Gastrocnemius medialis (tissue), 4 donors: ENCODE measurements at regions of chr22 and their contacts with region 1.

Region 1: DNA sequence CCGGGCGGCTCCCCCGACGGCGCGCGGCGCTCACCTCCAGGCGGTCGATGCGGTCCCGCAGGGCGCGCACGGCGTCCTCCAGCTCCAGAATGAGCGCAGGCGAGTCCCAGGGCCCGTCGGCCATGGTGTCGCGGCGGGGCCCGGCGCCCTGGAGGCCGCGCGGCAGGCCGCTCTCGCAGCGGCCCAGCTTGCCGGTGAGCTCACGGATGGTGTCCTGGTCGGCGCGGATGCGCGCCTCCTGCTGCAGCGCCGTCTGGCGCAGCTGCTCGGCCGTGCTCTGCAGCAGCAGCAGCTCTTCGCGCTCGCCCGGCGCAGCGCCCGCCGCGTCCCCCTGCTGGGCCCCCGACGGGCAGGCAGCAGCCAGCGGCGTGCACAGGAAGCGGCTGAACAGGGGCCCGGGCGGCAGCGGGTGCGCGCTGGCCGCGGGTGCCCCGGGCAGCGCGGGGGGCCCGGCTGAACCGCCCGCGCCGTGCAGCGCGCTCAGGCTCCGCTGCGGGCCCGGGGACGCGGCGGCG is 570 bp downstream of the NPTXR start:
- DNase-seq: no peak
- ATAC-seq: peak; percentile 29 to 36
- H3K4me3 ChIP-seq: peak overlapping the region in 3 of 4 donors; percentile 9 to 45 (median 40)
- H3K27ac ChIP-seq: no peak overlapping the region
- H3K4me1 ChIP-seq: no peaks in the 10 kb centered on the region
- H3K27me3 ChIP-seq: peaks cover 9 to 23% (median 17%) of the 10 kb centered on the region in 3 donors
- CTCF ChIP-seq: peak in 2 of 5 experiments; percentile 12 to 34
- POLR2A ChIP-seq: no peak

Region 2: GRCh38 chr22:38766076-38766777 is 77.0 kb before region 1 on chr22:
- in situ Hi-C with region 1: no loop called
- intact Hi-C with region 1: loop called (anchors 5 kb)
- DNase-seq: peak; percentile 68 to 71
- ATAC-seq: peak; percentile 76 to 79
- H3K4me3 ChIP-seq: no peak overlapping the region
- H3K27ac ChIP-seq: no peak overlapping the region
- H3K4me1 ChIP-seq: peaks cover 4 to 11% of the 10 kb centered on the region in 2 donors
- H3K27me3 ChIP-seq: peaks cover 0 to 14% (median 8%) of the 10 kb centered on the region in 3 donors
- CTCF ChIP-seq: peak; percentile 58 to 81 (median 75)
- POLR2A ChIP-seq: no peak

Region 3: DNA sequence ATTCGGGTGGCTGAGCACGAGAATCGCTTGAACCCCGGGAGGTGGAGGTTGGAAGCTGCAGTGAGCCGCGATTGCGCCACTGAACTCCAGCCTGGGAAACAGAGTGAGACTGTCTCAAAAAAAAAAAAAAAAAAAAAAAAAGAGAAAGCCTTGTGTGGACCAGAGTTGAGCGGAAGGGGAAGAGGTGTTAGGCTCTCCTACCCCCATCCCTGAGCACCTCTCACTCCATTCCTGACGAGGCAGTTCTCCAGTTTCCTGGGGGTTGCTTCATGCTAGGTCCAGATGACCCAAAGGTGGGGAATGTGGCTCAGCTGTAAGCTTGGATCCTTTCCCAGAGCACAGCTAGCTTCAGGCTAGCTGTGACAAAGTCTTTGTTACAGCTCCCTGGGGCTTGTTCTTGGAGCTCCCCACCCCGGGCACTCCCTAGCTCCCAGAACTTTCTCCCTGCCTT is 40.6 kb before region 1 on chr22:
- in situ Hi-C with region 1: no loop called
- intact Hi-C with region 1: loop called (anchors 5 kb)
- DNase-seq: peak; percentile 46 to 85
- ATAC-seq: peak; percentile 94 to 99
- H3K4me3 ChIP-seq: no peak overlapping the region
- H3K27ac ChIP-seq: no peak overlapping the region
- H3K4me1 ChIP-seq: peaks cover 0 to 8% of the 10 kb centered on the region in 2 donors
- H3K27me3 ChIP-seq: peaks cover 10 to 23% (median 12%) of the 10 kb centered on the region in 3 donors
- CTCF ChIP-seq: no peak
- POLR2A ChIP-seq: no peak